Gastrocnemius medialis (tissue), 4 donors: ENCODE measurements at regions of chr10 and their contacts with region 1.

Region 1: DNA sequence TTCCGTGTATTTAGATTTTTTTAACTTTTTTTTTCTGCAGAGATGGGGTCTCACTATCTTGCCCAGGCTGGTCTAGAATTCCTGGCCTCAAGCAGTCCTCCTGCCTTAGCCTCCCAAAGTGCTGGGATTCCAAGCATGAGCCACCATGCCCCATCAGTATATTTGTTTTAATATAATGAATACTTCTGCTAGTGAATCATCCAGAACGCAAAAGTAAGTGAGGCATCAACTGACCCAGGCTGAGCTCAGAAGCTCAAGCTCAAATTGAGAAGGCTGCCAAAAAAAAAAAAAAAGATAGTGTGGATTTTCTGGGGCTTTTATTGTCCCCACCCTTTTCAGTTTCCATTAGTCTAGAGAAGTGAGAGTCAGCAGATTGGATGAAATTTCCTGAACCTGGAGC is 39.0 kb upstream of the TECTB start:
- DNase-seq: no peak
- ATAC-seq: no peak
- H3K4me3 ChIP-seq: no peak overlapping the region
- H3K27ac ChIP-seq: no peak overlapping the region
- H3K4me1 ChIP-seq: peaks cover 6 to 13% of the 10 kb centered on the region in 2 donors
- H3K27me3 ChIP-seq: no peaks in the 10 kb centered on the region
- CTCF ChIP-seq: no peak
- POLR2A ChIP-seq: no peak

Region 2: GRCh38 chr10:112000466-112000865 is 243.7 kb before region 1 on chr10:
- in situ Hi-C with region 1: no loop called
- intact Hi-C with region 1: no loop called
- DNase-seq: peak; percentile 11 to 37
- ATAC-seq: peak; percentile 55 to 56
- H3K4me3 ChIP-seq: no peak overlapping the region
- H3K27ac ChIP-seq: no peak overlapping the region
- H3K4me1 ChIP-seq: no peaks in the 10 kb centered on the region
- H3K27me3 ChIP-seq: no peaks in the 10 kb centered on the region
- CTCF ChIP-seq: no peak
- POLR2A ChIP-seq: no peak

Region 3: DNA sequence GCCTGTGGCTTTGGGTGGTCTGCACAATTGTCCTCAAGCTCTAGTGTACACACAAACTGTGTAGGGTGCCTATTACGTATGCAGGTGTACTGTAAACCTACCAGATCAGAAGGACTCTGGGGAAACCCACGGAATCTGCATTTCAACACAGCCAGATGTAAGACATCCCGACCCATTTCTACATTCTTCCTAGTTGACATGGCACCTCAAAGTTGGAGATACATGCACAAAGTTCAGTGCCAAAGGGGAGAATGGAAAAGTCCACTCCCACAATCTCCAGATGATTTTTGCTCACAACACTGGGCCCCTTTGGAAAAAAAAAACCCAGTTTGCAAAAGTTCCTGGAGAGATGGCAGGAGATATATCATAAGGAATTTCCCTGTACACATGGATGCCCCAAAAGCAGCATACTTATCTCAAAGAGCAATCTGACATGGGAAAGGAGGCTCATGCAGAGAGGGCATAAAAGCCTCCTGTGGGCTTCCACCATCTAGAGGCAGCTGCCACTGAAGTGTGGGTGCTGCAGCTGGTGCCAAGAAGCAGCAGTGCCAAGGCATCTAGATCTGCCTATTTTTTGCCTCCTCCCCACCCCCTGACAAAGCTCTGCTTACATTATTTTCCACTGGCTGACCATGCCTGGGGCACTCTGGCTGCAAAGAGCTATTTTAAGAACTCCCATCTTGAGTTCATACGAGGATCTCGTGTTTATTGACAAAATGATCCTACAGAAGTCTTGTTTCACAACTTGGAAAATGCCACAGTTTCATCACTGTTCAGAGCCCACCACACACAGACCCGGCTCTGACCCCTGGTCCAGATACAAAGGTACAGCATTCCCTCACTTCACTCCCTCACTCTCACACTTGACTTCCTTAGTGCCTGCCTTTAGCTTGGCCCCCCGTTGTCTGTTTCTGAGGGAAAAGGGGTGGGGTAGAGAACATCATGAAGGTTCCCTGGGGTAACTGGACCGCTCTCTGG is 51.9 kb after region 1 on chr10:
- in situ Hi-C with region 1: no loop called
- intact Hi-C with region 1: loop called (anchors 5 kb)
- DNase-seq: peak; percentile 15 to 22
- ATAC-seq: peak; percentile 66 to 67
- H3K4me3 ChIP-seq: no peak overlapping the region
- H3K27ac ChIP-seq: peak overlapping the region; percentile 35 to 78 (median 50)
- H3K4me1 ChIP-seq: peaks cover 22 to 31% of the 10 kb centered on the region in 2 donors
- H3K27me3 ChIP-seq: no peaks in the 10 kb centered on the region
- CTCF ChIP-seq: no peak
- POLR2A ChIP-seq: no peak